Right cardiac atrium (tissue), 5 donors: ENCODE measurements at regions of chr17 and their contacts with region 1.

Region 1: GRCh38 chr17:51120739-51121617 is at the start of gene SPAG9:
- DNase-seq: peak; percentile 99
- ATAC-seq: peak; percentile 90 to 93
- H3K4me3 ChIP-seq: peak within 1 kb of the TSS; percentile 67
- H3K27ac ChIP-seq: peak within 1 kb of the TSS; percentile 99
- H3K4me1 ChIP-seq: peaks cover 8% of the 10 kb centered on the region
- H3K27me3 ChIP-seq: no peaks in the 10 kb centered on the region
- total RNA-seq, gene SPAG9: 58.4 to 81.0 (median 60.8) TPM

Region 2: GRCh38 chr17:51056813-51057510 is 64.0 kb before region 1 on chr17:
- intact Hi-C with region 1: loop called in 1 of 4 experiments (anchors 10 kb)
- DNase-seq: no peak
- ATAC-seq: peak; percentile 83 to 89
- H3K4me3 ChIP-seq: no peak overlapping the region
- H3K27ac ChIP-seq: peak overlapping the region; percentile 84
- H3K4me1 ChIP-seq: peaks cover 4% of the 10 kb centered on the region
- H3K27me3 ChIP-seq: no peaks in the 10 kb centered on the region

Region 3: DNA sequence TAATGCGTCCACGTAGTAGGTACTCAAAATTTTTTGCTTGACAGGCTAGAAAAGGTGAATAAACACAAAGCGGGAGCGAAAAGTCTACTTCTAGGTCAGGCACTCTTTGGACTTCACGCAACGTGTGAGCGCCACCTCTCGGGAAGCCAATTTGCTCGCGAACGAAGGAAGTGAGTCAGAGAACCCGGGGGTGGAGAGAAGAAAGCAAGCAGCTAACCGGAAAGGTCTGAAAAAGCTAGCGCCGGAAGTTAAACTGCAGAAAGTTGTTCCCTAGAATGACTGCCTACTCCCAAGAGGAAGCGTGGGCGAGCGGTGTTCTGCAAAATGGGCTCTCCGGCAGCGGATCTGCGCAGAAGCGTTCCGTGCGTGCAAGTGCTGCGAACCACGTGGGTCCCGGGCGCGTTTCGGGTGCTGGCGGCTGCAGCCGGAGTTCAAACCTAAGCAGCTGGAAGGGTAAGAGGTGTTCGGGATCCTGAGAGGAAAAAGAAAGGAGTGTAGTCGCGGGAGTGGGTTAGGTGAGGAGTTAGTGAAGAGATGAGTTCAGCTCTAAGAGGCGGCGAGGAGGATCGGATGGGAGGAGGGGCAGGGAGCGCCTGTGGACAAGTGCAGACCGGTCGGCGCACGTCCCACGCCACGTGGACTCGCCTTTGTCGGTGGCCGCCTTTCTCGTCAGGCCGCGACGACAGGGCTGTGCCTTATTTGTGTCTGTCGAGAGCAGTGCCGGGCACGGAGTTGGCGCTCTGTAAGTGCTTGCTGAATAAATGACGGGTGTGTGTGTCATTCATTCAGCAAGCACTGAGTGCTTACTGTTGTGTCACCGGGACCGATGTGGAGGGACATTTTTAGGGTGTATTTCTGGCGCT is 32.5 kb after region 1 on chr17 and contains the start of gene NME1:
- intact Hi-C with region 1: loop called in 2 of 4 experiments (anchors 2 kb)
- DNase-seq: peak; percentile 94 to 97 (median 97)
- ATAC-seq: peak; percentile 97
- H3K4me3 ChIP-seq: peak within 1 kb of the TSS; percentile 51
- H3K27ac ChIP-seq: peak within 1 kb of the TSS; percentile 86
- H3K4me1 ChIP-seq: peaks cover 2% of the 10 kb centered on the region
- H3K27me3 ChIP-seq: no peaks in the 10 kb centered on the region
- total RNA-seq, gene NME1: 18.7 to 43.8 (median 25.0) TPM

Region 4: DNA sequence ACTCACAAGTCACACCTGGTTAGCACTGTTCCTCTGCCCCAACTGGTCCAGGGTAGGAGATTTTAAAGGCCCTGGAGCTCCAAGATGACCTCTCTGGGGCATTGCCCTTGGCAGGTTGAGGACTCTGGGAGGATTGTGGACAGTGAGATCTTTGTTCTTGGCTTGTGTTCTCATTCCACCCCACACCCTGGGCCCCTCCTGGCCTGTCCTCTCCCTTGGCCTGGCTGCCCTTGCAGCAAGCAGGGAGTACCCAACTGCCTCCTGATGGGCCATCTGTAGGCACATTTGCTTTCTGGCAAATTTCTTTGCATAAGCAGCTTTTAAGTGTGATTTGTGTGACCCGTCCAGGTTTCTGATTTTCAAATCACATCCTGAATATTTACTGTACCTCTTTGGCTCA is 378.9 kb after region 1 on chr17:
- intact Hi-C with region 1: no loop called
- DNase-seq: no peak
- ATAC-seq: no peak
- H3K4me3 ChIP-seq: no peak overlapping the region
- H3K27ac ChIP-seq: no peak overlapping the region
- H3K4me1 ChIP-seq: no peaks in the 10 kb centered on the region
- H3K27me3 ChIP-seq: no peaks in the 10 kb centered on the region